Breast epithelium (tissue), 4 donors: ENCODE measurements at regions of chr5 and their contacts with region 1.

Region 1: GRCh38 chr5:24816206-24816605 is 171.4 kb upstream of the CDH10 start:
- DNase-seq: no peak
- H3K4me3 ChIP-seq: no peak overlapping the region
- H3K27ac ChIP-seq: no peak overlapping the region
- H3K4me1 ChIP-seq: no peaks in the 10 kb centered on the region
- H3K27me3 ChIP-seq: no peaks in the 10 kb centered on the region
- CTCF ChIP-seq: no peak
- POLR2A ChIP-seq: no peak

Region 2: DNA sequence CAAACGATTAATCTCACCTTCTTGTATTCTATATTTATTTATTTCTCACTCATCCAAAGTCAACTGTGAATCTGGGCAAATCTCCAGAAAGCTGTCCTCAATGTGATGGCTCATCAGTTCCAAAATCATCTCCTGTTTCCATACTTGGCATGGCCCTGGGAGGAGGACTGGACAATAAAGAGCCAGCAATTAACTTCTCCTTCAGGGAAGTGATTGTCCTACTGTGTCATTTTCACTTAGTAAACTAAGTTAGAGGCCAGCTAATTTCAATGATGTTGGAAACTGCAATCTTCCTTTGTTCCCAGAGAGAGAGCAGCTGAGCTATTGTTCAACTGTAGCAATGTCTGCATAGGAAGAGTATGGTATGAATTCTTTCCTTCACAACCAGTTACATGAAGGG is 1980.5 kb before region 1 on chr5:
- intact Hi-C with region 1: no loop called
- DNase-seq: no peak
- H3K4me3 ChIP-seq: no peak overlapping the region
- H3K27ac ChIP-seq: no peak overlapping the region
- H3K4me1 ChIP-seq: no peaks in the 10 kb centered on the region
- H3K27me3 ChIP-seq: no peaks in the 10 kb centered on the region
- CTCF ChIP-seq: no peak
- POLR2A ChIP-seq: no peak

Region 3: DNA sequence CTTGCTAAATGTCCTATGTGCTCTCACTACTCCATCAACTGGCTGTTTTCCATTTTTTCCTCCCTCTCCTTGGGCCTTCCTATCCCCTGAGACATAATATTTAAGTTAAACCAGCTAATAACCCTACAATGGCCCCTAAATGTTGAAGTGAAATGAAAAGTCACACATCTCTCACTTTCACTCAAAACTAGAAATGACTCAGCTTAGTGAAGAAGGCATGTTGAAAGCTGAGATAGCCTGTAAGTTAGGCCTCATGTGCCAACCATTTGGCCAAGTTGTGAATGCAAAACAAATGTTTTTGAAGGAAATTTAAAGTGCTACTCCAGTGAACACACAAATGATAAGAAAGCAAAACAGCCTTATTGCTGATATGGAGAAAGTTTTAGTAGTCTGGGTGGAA is 122.6 kb before region 1 on chr5:
- intact Hi-C with region 1: loop called (anchors 5 kb)
- DNase-seq: no peak
- H3K4me3 ChIP-seq: no peak overlapping the region
- H3K27ac ChIP-seq: no peak overlapping the region
- H3K4me1 ChIP-seq: no peaks in the 10 kb centered on the region
- H3K27me3 ChIP-seq: no peaks in the 10 kb centered on the region
- CTCF ChIP-seq: no peak
- POLR2A ChIP-seq: no peak

Region 4: GRCh38 chr5:24703934-24704333 is 112.3 kb before region 1 on chr5:
- intact Hi-C with region 1: loop called (anchors 5 kb)
- DNase-seq: no peak
- H3K4me3 ChIP-seq: no peak overlapping the region
- H3K27ac ChIP-seq: no peak overlapping the region
- H3K4me1 ChIP-seq: no peaks in the 10 kb centered on the region
- H3K27me3 ChIP-seq: no peaks in the 10 kb centered on the region
- CTCF ChIP-seq: no peak
- POLR2A ChIP-seq: no peak